Mammary epithelial cell (primary cell): ENCODE measurements at regions of chr22 and their contacts with region 1.

Region 1: GRCh38 chr22:22195265-22196017 is 49.1 kb upstream of the VPREB1 start:
- DNase-seq: peak; percentile 66
- H3K4me3 ChIP-seq: no peak overlapping the region
- H3K27ac ChIP-seq: no peak overlapping the region
- H3K4me1 ChIP-seq: no peaks in the 10 kb centered on the region
- H3K27me3 ChIP-seq: no peaks in the 10 kb centered on the region
- CTCF ChIP-seq: peak; percentile 91 to 94

Region 2: GRCh38 chr22:22110548-22111266 is 84.7 kb before region 1 on chr22:
- CTCF ChIA-PET with region 1: interaction called, 4 read pairs
- dilution Hi-C with region 1: no loop called
- in situ Hi-C with region 1: no loop called
- intact Hi-C with region 1: loop called (anchors 1 kb)
- DNase-seq: peak; percentile 93
- H3K4me3 ChIP-seq: no peak overlapping the region
- H3K27ac ChIP-seq: peak overlapping the region; percentile 82
- H3K4me1 ChIP-seq: peaks cover 18% of the 10 kb centered on the region
- H3K27me3 ChIP-seq: no peaks in the 10 kb centered on the region
- CTCF ChIP-seq: peak; percentile 79 to 87

Region 3: GRCh38 chr22:22156716-22157347 is 38.6 kb before region 1 on chr22:
- CTCF ChIA-PET with region 1: no interaction called
- dilution Hi-C with region 1: loop called (anchors 5 kb)
- in situ Hi-C with region 1: no loop called
- intact Hi-C with region 1: loop called (anchors 2 kb)
- DNase-seq: peak; percentile 43
- H3K4me3 ChIP-seq: no peak overlapping the region
- H3K27ac ChIP-seq: no peak overlapping the region
- H3K4me1 ChIP-seq: no peaks in the 10 kb centered on the region
- H3K27me3 ChIP-seq: no peaks in the 10 kb centered on the region
- CTCF ChIP-seq: peak; percentile 71 to 86

Region 4: DNA sequence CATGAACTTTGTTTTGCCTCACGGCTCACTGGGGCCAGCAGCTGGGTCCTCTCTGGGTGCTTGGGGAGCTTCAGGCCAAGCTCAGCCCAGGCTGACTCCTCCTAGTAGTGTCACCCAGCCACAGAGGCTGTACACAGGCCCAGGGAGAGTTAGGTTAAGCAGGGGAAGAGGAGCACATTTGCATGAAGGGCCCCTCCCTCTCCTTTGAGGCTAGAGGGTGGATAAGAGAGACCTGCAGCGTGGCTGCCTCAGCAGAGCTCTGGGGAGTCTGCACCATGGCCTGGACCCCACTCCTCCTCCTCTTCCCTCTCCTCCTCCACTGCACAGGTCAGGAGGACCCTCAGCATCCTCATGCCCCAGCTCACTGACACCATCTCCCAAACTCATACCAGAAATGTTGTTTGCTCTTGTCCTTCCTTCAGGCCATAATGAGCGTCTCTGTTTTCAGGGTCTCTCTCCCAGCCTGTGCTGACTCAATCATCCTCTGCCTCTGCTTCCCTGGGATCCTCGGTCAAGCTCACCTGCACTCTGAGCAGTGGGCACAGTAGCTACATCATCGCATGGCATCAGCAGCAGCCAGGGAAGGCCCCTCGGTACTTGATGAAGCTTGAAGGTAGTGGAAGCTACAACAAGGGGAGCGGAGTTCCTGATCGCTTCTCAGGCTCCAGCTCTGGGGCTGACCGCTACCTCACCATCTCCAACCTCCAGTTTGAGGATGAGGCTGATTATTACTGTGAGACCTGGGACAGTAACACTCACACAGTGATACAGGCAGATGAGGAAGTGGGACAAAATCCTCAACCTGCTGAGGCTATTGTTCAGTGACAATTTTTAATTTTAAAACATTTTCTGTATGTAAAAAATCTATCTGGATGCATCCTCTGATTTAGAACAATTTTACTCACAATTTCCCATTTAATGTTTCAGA is 33.3 kb before region 1 on chr22:
- CTCF ChIA-PET with region 1: no interaction called
- dilution Hi-C with region 1: loop called (anchors 5 kb)
- in situ Hi-C with region 1: no loop called
- intact Hi-C with region 1: loop called (anchors 2 kb)
- DNase-seq: no peak
- H3K4me3 ChIP-seq: no peak overlapping the region
- H3K27ac ChIP-seq: no peak overlapping the region
- H3K4me1 ChIP-seq: no peaks in the 10 kb centered on the region
- H3K27me3 ChIP-seq: no peaks in the 10 kb centered on the region
- CTCF ChIP-seq: no peak

Region 5: GRCh38 chr22:22235558-22235957 is 40.1 kb after region 1 on chr22:
- CTCF ChIA-PET with region 1: interaction called, 10 read pairs
- dilution Hi-C with region 1: loop called (anchors 5 kb)
- in situ Hi-C with region 1: no loop called
- intact Hi-C with region 1: loop called (anchors 1 kb)
- DNase-seq: peak; percentile 9
- H3K4me3 ChIP-seq: no peak overlapping the region
- H3K27ac ChIP-seq: no peak overlapping the region
- H3K4me1 ChIP-seq: no peaks in the 10 kb centered on the region
- H3K27me3 ChIP-seq: no peaks in the 10 kb centered on the region
- CTCF ChIP-seq: peak; percentile 62 to 75